ENCODE measurements at regions of chr12 and their contacts with region 1.

Region 1: GRCh38 chr12:6182116-6182898 is 17.9 kb upstream of the CD9 start:
- DNase-seq: peak; percentile 33 to 64
- ATAC-seq: peak in 3 of 4 donors; percentile 36 to 50 (median 42)
- H3K4me3 ChIP-seq: peak overlapping the region; percentile 25
- H3K27ac ChIP-seq: peak overlapping the region; percentile 46
- H3K4me1 ChIP-seq: peaks cover 30% of the 10 kb centered on the region
- H3K27me3 ChIP-seq: peaks cover 0 to 2% (median 0%) of the 10 kb centered on the region in 3 donors
- CTCF ChIP-seq: no peak

Region 2: GRCh38 chr12:5988659-5989116 is 193.6 kb before region 1 on chr12:
- intact Hi-C with region 1: loop called in 1 of 2 experiments (anchors 10 kb)
- DNase-seq: peak; percentile 76 to 84
- ATAC-seq: peak; percentile 85 to 96 (median 93)
- H3K4me3 ChIP-seq: no peak overlapping the region
- H3K27ac ChIP-seq: no peak overlapping the region
- H3K4me1 ChIP-seq: no peaks in the 10 kb centered on the region
- H3K27me3 ChIP-seq: no peaks in the 10 kb centered on the region
- CTCF ChIP-seq: peak; percentile 94

Region 3: DNA sequence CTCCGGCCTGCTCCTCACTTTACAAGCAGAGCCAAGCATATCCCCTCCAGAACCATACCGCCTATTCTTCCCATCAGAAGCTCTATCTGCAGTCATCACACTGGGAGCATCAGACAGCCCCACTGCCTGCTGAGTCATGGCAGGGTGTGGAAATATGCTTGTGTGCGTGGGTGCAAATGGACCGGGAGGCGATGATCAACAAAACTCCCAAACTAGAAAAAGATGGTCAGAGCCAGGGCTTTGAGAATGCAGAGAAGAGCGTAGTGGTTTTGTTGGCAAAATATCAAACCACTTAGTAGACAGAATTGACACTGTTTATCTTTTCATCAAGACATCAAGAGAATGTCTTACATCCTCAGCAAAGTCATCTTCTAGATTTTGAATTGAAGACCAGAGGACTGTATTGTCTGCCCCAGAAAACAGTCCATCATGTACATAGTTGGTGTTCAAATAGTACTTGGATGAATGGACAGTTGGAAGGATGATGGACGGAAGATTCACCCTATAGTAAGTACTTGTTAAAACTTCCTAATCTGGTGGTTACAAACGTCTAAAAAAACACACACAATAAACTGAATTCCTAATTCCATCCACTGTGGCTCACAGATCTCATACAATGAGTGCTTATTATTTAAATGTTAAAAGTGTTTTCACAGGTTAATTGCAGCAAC is 112.7 kb before region 1 on chr12:
- intact Hi-C with region 1: loop called (anchors 5 kb)
- DNase-seq: peak in 1 of 2 donors; percentile 45
- ATAC-seq: peak in 1 of 4 donors; percentile 37
- H3K4me3 ChIP-seq: no peak overlapping the region
- H3K27ac ChIP-seq: no peak overlapping the region
- H3K4me1 ChIP-seq: peaks cover 2% of the 10 kb centered on the region
- H3K27me3 ChIP-seq: peaks cover 0 to 17% (median 0%) of the 10 kb centered on the region in 3 donors
- CTCF ChIP-seq: no peak

Measured in psoas muscle (tissue), 8 donors.